IMR-90 (cell line): ENCODE measurements at regions of chr9 and their contacts with region 1.

Region 1: GRCh38 chr9:116234106-116234505 is 80.5 kb downstream of the PAPPA start:
- DNase-seq: peak; percentile 99
- ATAC-seq: peak; percentile 94
- H3K4me3 ChIP-seq: no peak overlapping the region
- H3K27ac ChIP-seq: peak overlapping the region; percentile 78
- H3K4me1 ChIP-seq: peaks cover 23% of the 10 kb centered on the region
- H3K27me3 ChIP-seq: no peaks in the 10 kb centered on the region
- CTCF ChIP-seq: no peak
- POLR2A ChIP-seq: peak; percentile 54; the same call in 1 of the 2 replicates
- RAD21 ChIP-seq: peak; percentile 23; the same call in 1 of the 2 replicates

Region 2: GRCh38 chr9:116247791-116248374 is 13.8 kb after region 1 on chr9:
- CTCF ChIA-PET with region 1: interaction called, 3 read pairs
- POLR2A ChIA-PET with region 1: interaction called, 12 read pairs
- dilution Hi-C with region 1: no loop called
- in situ Hi-C with region 1: no loop called
- intact Hi-C with region 1: no loop called
- DNase-seq: no peak
- ATAC-seq: no peak
- H3K4me3 ChIP-seq: no peak overlapping the region
- H3K27ac ChIP-seq: no peak overlapping the region
- H3K4me1 ChIP-seq: peaks cover 10% of the 10 kb centered on the region; the same call in 1 of the 2 replicates
- H3K27me3 ChIP-seq: no peaks in the 10 kb centered on the region
- CTCF ChIP-seq: no peak
- POLR2A ChIP-seq: no peak
- RAD21 ChIP-seq: no peak

Region 3: GRCh38 chr9:116327701-116328405 is 93.7 kb after region 1 on chr9:
- CTCF ChIA-PET with region 1: no interaction called
- POLR2A ChIA-PET with region 1: no interaction called
- dilution Hi-C with region 1: no loop called
- in situ Hi-C with region 1: no loop called
- intact Hi-C with region 1: loop called (anchors 5 kb)
- DNase-seq: peak; percentile 69
- ATAC-seq: peak; percentile 81
- H3K4me3 ChIP-seq: no peak overlapping the region
- H3K27ac ChIP-seq: peak overlapping the region; percentile 82; the same call in 1 of the 2 replicates
- H3K4me1 ChIP-seq: peaks cover 11% of the 10 kb centered on the region
- H3K27me3 ChIP-seq: no peaks in the 10 kb centered on the region
- CTCF ChIP-seq: no peak
- POLR2A ChIP-seq: no peak
- RAD21 ChIP-seq: no peak